ENCODE measurements at regions of chr6 and their contacts with region 1.

Region 1: GRCh38 chr6:11653028-11653583 is 115.6 kb downstream of the TMEM170B start:
- DNase-seq: peak; percentile 15
- ATAC-seq: no peak; the same call in 2 of the 3 replicates
- H3K4me3 ChIP-seq: no peak overlapping the region
- H3K27ac ChIP-seq: no peak overlapping the region
- H3K4me1 ChIP-seq: no peaks in the 10 kb centered on the region
- H3K27me3 ChIP-seq: peaks cover 0 to 22% of the 10 kb centered on the region in 2 experiments; a peak in 2 of 5 replicates
- CTCF ChIP-seq: no peak
- EP300 ChIP-seq: no peak
- POLR2A ChIP-seq: no peak
- RAD21 ChIP-seq: no peak

Region 2: DNA sequence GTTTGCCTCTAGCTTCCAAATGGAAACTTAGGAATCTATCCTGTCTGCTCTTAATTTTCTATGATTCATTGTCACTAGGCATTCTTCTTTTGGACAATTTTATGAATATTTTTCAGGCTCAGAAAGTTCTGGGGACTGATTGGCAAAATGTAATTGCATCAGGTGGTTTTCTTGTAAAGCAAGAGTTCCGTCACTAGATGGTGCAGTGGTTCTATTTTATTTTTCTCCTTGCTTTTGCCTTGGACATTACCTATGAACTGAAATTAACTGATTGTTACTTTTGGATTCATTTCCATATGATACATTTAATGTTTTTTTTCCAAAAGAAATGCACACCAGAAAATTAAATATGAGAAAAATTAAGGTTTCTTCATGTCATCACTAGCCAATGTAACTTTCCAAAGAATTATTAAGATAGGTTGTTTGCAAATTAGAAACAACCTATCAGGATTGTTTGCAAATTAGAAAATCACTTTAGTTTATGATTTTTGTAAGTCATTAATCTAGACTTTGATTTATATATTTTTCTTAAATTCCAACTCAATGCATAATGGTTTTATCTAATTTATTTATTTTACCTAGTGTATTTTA is 67.6 kb before region 1 on chr6:
- CTCF ChIA-PET with region 1: interaction called, 4 read pairs
- POLR2A ChIA-PET with region 1: no interaction called
- in situ Hi-C with region 1: no loop called
- intact Hi-C with region 1: loop called (anchors 1 kb)
- DNase-seq: peak; percentile 55
- ATAC-seq: peak; percentile 62
- H3K4me3 ChIP-seq: no peak overlapping the region
- H3K27ac ChIP-seq: no peak overlapping the region
- H3K4me1 ChIP-seq: peaks cover 13% of the 10 kb centered on the region
- H3K27me3 ChIP-seq: no peaks in the 10 kb centered on the region; a peak in 1 of 5 replicates
- CTCF ChIP-seq: peak; percentile 74
- EP300 ChIP-seq: no peak
- POLR2A ChIP-seq: no peak
- RAD21 ChIP-seq: peak; percentile 51; the same call in 1 of the 2 replicates

Region 3: DNA sequence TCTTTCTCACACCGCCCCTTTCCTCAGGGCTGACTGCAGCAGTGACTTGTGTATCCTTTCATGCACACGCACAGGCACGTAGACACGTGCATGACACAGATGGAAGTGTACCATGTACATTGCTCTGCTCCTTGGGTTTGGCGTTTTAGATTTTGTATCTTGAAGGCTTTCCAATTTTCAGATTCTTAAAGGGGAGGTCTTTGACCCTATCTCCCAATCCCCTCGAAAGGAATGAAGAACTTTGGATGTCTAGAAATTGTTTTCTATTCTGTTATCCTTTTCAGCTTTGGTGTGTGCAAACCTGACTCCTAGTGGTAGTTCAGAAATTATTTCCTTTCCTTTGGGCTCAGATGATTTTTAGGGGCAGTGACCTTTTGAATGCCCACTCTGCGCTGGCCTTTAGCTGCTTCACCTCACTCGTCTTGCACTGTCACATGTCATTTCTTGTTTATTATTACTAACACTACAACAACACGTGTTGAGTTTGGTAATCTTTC is 422.0 kb after region 1 on chr6:
- CTCF ChIA-PET with region 1: no interaction called
- POLR2A ChIA-PET with region 1: no interaction called
- in situ Hi-C with region 1: no loop called
- intact Hi-C with region 1: loop called (anchors 1 kb)
- DNase-seq: peak; percentile 9
- ATAC-seq: peak; percentile 59
- H3K4me3 ChIP-seq: no peak overlapping the region
- H3K27ac ChIP-seq: no peak overlapping the region
- H3K4me1 ChIP-seq: peaks cover 7% of the 10 kb centered on the region
- H3K27me3 ChIP-seq: no peaks in the 10 kb centered on the region
- CTCF ChIP-seq: peak; percentile 63
- EP300 ChIP-seq: no peak
- POLR2A ChIP-seq: no peak
- RAD21 ChIP-seq: 0 out of 2 replicates have a peak, but pooled peaks have one; percentile 22

Region 4: DNA sequence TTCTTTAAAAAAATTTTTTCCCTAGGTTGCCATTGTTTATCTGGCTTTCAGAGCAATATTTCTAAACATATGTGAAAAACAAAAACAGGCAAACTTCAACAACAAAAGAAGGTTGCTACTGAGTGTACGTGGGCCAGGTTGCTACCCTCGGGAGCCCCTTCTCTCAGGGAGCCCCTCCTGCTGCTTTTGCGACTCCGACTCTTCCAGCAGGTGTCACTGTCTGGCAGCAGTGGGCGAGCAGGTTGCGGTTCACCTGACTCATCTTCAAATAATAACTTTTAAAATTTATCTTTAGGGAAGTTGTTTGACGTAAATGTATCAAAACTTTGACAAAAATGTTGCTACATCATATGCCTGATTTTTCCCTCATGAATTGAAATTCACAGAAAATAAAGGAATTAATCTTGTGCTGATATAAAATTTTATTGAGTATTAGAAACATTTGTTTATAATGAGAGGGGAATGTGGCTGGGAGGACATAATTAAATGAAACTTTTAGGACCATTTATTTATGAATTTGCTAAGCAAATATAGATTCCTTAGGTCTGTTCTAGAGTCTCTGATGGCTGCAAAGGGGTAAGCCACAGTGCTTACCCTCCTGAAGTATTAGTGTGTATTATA is 497.8 kb after region 1 on chr6:
- CTCF ChIA-PET with region 1: no interaction called
- POLR2A ChIA-PET with region 1: no interaction called
- in situ Hi-C with region 1: no loop called
- intact Hi-C with region 1: loop called (anchors 2 kb)
- DNase-seq: peak; percentile 38
- ATAC-seq: peak; percentile 90
- H3K4me3 ChIP-seq: no peak overlapping the region
- H3K27ac ChIP-seq: no peak overlapping the region
- H3K4me1 ChIP-seq: no peaks in the 10 kb centered on the region
- H3K27me3 ChIP-seq: no peaks in the 10 kb centered on the region
- CTCF ChIP-seq: peak; percentile 81
- EP300 ChIP-seq: no peak
- POLR2A ChIP-seq: no peak
- RAD21 ChIP-seq: peak; percentile 70

Region 5: GRCh38 chr6:12233693-12234571 is 580.8 kb after region 1 on chr6:
- CTCF ChIA-PET with region 1: interaction called, 8 read pairs
- POLR2A ChIA-PET with region 1: no interaction called
- in situ Hi-C with region 1: loop called (anchors 10 kb)
- intact Hi-C with region 1: loop called (anchors 1 kb)
- DNase-seq: peak; percentile 67
- ATAC-seq: peak; percentile 81
- H3K4me3 ChIP-seq: no peak overlapping the region
- H3K27ac ChIP-seq: no peak overlapping the region
- H3K4me1 ChIP-seq: peaks cover 27% of the 10 kb centered on the region
- H3K27me3 ChIP-seq: no peaks in the 10 kb centered on the region
- CTCF ChIP-seq: peak; percentile 67
- EP300 ChIP-seq: no peak
- POLR2A ChIP-seq: no peak
- RAD21 ChIP-seq: peak; percentile 78

Region 6: DNA sequence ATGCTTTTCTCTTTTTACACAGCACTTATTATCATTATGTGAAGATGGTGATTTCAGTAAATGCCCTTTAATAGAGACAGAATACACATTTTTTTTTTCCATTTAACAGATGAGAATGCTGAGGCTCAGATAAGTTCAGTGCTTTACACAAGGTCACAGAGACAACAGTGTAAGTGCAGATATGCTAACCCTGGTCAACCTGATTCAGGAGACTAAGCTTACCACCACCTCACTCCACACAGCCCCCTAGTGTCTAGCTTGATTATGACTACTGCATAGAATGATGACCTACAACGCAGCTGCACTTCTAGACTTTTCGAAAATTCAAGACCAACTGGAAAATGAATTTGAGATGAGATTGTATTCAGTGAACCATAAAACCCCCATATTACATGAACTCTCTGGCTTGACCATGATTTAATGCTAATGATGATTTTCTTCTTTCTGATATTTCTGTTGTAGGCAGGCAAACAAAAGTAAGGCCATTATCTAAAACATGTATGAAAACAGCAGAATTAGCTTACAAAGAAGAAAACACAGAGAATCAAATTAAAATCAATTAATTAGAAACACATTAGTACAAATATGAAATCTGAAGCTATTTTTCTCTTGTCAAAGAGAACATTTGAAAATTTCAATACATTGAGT is 851.3 kb after region 1 on chr6:
- CTCF ChIA-PET with region 1: no interaction called
- POLR2A ChIA-PET with region 1: no interaction called
- in situ Hi-C with region 1: no loop called
- intact Hi-C with region 1: loop called (anchors 10 kb)
- DNase-seq: peak; percentile 47
- ATAC-seq: peak; percentile 96
- H3K4me3 ChIP-seq: no peak overlapping the region
- H3K27ac ChIP-seq: no peak overlapping the region
- H3K4me1 ChIP-seq: no peaks in the 10 kb centered on the region
- H3K27me3 ChIP-seq: no peaks in the 10 kb centered on the region
- CTCF ChIP-seq: peak; percentile 81
- EP300 ChIP-seq: no peak
- POLR2A ChIP-seq: no peak
- RAD21 ChIP-seq: peak; percentile 48

Region 7: DNA sequence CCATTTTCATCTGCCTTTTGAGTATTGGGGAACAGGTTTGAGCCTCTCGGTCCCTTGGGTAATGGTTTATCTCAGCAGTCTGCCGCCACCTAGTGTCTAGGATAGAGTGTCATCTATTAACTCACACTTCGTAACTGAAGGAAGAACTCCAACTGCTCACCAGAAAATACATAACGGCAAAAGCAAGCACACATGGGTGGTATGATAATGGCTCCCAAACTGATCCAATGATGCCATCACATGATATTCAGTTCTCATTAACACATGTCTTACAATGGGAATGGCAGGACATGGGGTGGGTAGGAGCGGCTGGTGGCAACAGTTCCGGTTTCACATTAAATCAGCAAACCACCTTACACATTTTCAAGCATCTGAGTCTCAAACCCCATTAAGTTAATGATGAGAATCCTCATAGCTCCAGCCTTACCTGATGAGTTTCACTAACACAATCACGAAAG is 952.8 kb after region 1 on chr6:
- CTCF ChIA-PET with region 1: interaction called, 18 read pairs
- POLR2A ChIA-PET with region 1: no interaction called
- in situ Hi-C with region 1: loop called (anchors 25 kb)
- intact Hi-C with region 1: loop called (anchors 1 kb)
- DNase-seq: peak; percentile 72
- ATAC-seq: peak; percentile 97
- H3K4me3 ChIP-seq: no peak overlapping the region
- H3K27ac ChIP-seq: no peak overlapping the region
- H3K4me1 ChIP-seq: no peaks in the 10 kb centered on the region
- H3K27me3 ChIP-seq: no peaks in the 10 kb centered on the region
- CTCF ChIP-seq: peak; percentile 93
- EP300 ChIP-seq: no peak
- POLR2A ChIP-seq: no peak
- RAD21 ChIP-seq: peak; percentile 76

Measured in HepG2 (cell line).